CD14-positive monocyte (primary cell): ENCODE measurements at regions of chr3 and their contacts with region 1.

Region 1: GRCh38 chr3:195106418-195106906 is 164.5 kb downstream of the XXYLT1 start:
- DNase-seq: peak; percentile 51 to 71 (median 54)
- H3K4me3 ChIP-seq: peak overlapping the region in 1 of 3 experiments; percentile 60
- H3K4me3 Mint-ChIP-seq: peak overlapping the region; percentile 63 to 83
- H3K27ac ChIP-seq: peak overlapping the region in 1 of 2 donors; percentile 66
- H3K27ac Mint-ChIP-seq: peak overlapping the region in 6 of 7 donors; percentile 69 to 86 (median 79)
- H3K4me1 ChIP-seq: peaks cover 64 to 82% of the 10 kb centered on the region in 2 donors
- H3K4me1 Mint-ChIP-seq: peaks cover 60% of the 10 kb centered on the region
- H3K27me3 ChIP-seq: no peaks in the 10 kb centered on the region
- H3K27me3 Mint-ChIP-seq: peaks cover 0 to 3% (median 0%) of the 10 kb centered on the region in 3 donors
- CTCF ChIP-seq: peak; percentile 100

Region 2: DNA sequence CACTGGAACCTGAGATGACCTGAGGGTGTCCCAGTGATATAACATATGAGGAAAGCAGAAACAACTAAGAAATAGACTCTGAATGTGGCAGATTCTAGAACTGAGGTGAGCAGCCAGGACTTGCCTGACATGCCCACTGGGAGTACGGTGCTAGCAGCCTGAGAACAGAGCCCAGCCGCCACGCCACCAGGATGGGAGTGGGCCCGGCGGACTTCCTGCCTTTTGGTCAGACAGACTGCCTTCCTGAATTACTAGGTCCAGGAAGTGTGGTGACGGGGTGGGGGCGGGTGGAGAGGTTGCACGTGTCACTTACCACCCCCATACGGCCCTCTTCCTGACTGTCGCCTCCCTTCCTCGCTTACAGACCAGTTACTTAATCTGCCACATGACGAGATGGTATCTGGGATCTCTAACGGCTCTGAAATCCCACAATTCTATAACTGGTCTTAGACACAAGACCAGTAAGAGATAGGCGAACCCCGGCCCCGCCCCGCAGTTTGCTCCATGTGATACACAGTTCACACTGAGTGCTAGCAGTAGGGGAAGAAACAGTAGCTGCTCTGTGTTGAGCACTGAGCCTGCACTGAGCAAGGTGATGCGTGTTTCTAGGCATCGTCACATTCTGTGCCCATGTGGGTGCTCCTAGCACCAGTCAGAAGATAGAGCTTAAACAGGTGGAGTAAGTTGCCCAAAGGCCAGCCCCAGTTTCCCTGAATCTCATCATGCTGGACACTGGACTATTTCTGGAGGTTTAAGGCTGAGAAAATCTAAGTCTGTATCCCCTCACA is 851.0 kb before region 1 on chr3:
- intact Hi-C with region 1: no loop called
- DNase-seq: peak; percentile 66 to 82 (median 73)
- H3K4me3 ChIP-seq: peak overlapping the region; percentile 26 to 74 (median 31)
- H3K4me3 Mint-ChIP-seq: peak overlapping the region; percentile 76 to 91
- H3K27ac ChIP-seq: peak overlapping the region; percentile 51 to 63
- H3K27ac Mint-ChIP-seq: peak overlapping the region; percentile 53 to 90 (median 79)
- H3K4me1 ChIP-seq: peaks cover 9 to 12% of the 10 kb centered on the region in 2 donors
- H3K4me1 Mint-ChIP-seq: peaks cover 26% of the 10 kb centered on the region
- H3K27me3 ChIP-seq: peaks cover 0 to 2% of the 10 kb centered on the region in 2 donors
- H3K27me3 Mint-ChIP-seq: peaks cover 10 to 12% (median 12%) of the 10 kb centered on the region in 3 donors
- CTCF ChIP-seq: no peak

Region 3: DNA sequence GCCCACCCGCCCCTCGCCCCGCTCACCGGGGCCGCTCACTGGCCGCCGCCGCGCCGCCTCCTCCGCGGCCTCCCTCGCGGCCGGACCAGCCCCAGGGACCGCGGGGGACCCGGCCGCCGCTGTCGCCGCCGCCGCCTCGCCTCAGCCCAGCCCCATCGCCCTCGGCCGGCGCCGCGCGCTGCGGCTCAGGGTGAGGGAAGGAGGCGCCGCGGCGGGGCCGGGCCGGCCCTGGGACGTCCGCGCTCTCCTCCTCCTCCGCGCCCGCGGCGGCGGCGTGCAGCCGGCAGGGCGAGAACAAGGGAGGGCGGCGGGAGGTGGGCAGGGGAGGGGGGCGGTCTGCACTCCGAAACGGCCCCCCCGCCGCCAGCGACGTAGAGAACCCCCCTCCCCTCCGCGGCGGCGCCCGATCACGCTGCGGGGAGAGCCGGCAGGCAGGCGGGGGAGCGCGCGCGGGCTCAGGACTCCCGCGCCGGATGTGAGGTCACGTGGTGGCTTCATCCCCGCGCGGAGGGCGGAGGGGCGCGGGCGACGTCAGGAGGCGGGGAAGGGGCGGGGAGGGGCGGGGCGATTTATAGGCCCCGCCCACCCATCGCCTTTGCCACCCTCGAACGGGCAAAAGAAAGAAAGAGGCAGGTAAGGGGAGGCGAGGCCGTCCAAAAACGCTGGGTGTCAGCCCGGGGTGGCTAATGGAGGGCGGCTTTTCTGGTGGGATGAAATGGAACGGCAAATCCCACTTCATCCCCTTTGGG is 619.7 kb before region 1 on chr3 and contains the start of gene ATP13A3:
- intact Hi-C with region 1: loop called in 1 of 2 experiments (anchors 5 kb)
- DNase-seq: peak; percentile 86 to 91 (median 90)
- H3K4me3 ChIP-seq: peak within 1 kb of the TSS; percentile 69 to 97 (median 95)
- H3K4me3 Mint-ChIP-seq: peak within 1 kb of the TSS; percentile 92 to 97
- H3K27ac ChIP-seq: peak within 1 kb of the TSS; percentile 77 to 90
- H3K27ac Mint-ChIP-seq: peak within 1 kb of the TSS; percentile 91 to 99 (median 95)
- H3K4me1 ChIP-seq: peaks cover 61 to 73% of the 10 kb centered on the region in 2 donors
- H3K4me1 Mint-ChIP-seq: peaks cover 68% of the 10 kb centered on the region
- H3K27me3 ChIP-seq: no peaks in the 10 kb centered on the region
- H3K27me3 Mint-ChIP-seq: peaks cover 0 to 6% (median 1%) of the 10 kb centered on the region in 3 donors
- CTCF ChIP-seq: no peak
- polyA plus RNA-seq, gene ATP13A3: 4.7 to 19.5 (median 5.2) TPM

Region 4: GRCh38 chr3:194738254-194739093 is 368.0 kb before region 1 on chr3:
- intact Hi-C with region 1: loop called in 1 of 2 experiments (anchors 5 kb)
- DNase-seq: no peak
- H3K4me3 ChIP-seq: no peak overlapping the region
- H3K4me3 Mint-ChIP-seq: no peak overlapping the region
- H3K27ac ChIP-seq: peak overlapping the region; percentile 22 to 88
- H3K27ac Mint-ChIP-seq: peak overlapping the region in 3 of 7 donors; percentile 9 to 50 (median 46)
- H3K4me1 ChIP-seq: peaks cover 9 to 11% of the 10 kb centered on the region in 2 donors
- H3K4me1 Mint-ChIP-seq: no peaks in the 10 kb centered on the region
- H3K27me3 ChIP-seq: no peaks in the 10 kb centered on the region
- H3K27me3 Mint-ChIP-seq: peaks cover 0 to 1% (median 0%) of the 10 kb centered on the region in 3 donors
- CTCF ChIP-seq: no peak

Region 5: DNA sequence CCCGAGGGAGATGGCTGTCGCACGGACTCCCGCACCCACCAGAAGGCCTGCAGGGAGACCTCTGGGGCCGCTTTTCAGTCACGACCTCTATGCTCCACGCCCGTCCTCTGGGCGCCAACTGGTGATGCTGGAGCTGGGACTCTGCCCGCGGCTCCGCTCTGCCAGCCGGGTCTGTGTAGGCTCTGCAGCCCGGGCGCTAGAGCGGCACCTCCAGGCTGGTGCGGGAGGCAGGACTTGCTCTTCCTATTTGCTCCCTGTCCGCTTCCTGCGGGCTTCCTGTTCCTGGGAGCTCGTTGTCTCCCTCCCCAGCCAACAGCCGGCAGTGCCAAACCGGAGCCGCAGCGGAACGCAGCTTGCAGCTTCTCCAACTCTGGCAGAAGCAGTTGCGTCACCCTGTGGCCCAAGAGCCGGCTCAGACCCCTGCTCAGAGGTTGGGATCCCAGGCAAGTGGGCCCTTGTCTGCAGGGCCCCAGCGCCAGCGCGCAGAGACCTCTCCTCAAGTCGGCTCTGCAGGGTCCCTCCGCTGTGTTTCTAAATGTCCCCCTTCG is 121.4 kb before region 1 on chr3:
- intact Hi-C with region 1: loop called in 1 of 2 experiments (anchors 5 kb)
- DNase-seq: peak; percentile 40 to 66 (median 62)
- H3K4me3 ChIP-seq: peak overlapping the region in 2 of 3 experiments; percentile 24 to 60
- H3K4me3 Mint-ChIP-seq: peak overlapping the region; percentile 73 to 74
- H3K27ac ChIP-seq: no peak overlapping the region
- H3K27ac Mint-ChIP-seq: peak overlapping the region; percentile 59 to 93 (median 85)
- H3K4me1 ChIP-seq: peaks cover 33 to 41% of the 10 kb centered on the region in 2 donors
- H3K4me1 Mint-ChIP-seq: peaks cover 57% of the 10 kb centered on the region
- H3K27me3 ChIP-seq: no peaks in the 10 kb centered on the region
- H3K27me3 Mint-ChIP-seq: peaks cover 0 to 5% (median 2%) of the 10 kb centered on the region in 3 donors
- CTCF ChIP-seq: no peak

Region 6: GRCh38 chr3:195259475-195260279 is 153.2 kb after region 1 on chr3:
- intact Hi-C with region 1: loop called in 1 of 2 experiments (anchors 10 kb)
- DNase-seq: peak; percentile 84 to 87 (median 85)
- H3K4me3 ChIP-seq: peak overlapping the region; percentile 49 to 95 (median 75)
- H3K4me3 Mint-ChIP-seq: peak overlapping the region; percentile 73 to 74
- H3K27ac ChIP-seq: peak overlapping the region; percentile 54 to 92
- H3K27ac Mint-ChIP-seq: peak overlapping the region in 6 of 7 donors; percentile 14 to 82 (median 57)
- H3K4me1 ChIP-seq: peaks cover 38 to 53% of the 10 kb centered on the region in 2 donors
- H3K4me1 Mint-ChIP-seq: peaks cover 42% of the 10 kb centered on the region
- H3K27me3 ChIP-seq: no peaks in the 10 kb centered on the region
- H3K27me3 Mint-ChIP-seq: peaks cover 0 to 2% (median 0%) of the 10 kb centered on the region in 3 donors
- CTCF ChIP-seq: peak; percentile 93